ENCODE measurements at regions of chr17 and their contacts with region 1.

Region 1: DNA sequence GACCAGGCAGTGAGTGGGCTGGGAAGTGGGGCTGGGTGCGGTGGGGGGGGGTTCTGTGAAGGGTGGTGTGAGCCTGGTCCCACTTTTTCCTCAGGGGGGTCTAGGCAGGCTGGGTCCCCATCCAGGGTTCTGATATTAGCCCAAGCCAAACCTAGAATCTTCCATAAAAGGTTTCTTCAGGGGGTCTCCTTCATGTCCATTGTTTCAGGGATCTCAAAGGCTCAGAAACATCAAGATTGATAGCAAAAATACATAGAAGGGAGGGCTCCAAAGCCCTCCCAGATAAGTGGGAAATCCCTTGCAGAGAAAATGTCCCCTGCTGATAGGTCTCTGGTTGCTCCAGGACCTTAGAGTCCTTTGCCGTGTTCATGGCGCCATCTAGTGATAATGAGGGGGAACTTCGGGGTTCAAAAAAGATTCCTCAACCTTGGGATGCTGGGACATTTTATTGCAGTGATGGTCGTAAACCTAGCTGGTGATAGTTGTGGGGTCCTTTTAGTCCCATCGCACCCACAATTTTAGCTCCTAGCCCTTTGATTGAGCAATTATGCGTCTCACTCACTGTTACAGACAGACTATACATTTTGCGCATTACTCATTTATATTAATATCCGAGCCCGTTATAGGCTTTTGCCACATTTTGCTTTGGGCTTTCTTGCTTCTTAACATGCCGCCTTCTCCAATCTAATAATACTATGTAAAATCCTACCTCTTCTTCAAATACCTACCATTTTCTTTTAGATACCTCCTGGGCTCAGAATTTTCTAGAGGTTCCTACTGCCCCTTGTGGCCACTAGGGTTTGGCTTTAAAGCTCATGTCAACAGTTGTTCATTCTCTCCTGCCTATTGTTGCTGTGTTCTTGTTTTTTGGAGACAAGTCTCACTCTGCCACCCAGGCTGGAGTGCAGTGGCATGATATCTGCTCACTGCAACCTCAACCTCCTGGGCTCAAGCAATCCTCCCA is 35.1 kb downstream of the IGF2BP1 start:
- DNase-seq: peak; percentile 60
- H3K4me3 ChIP-seq: no peak overlapping the region
- H3K27ac ChIP-seq: no peak overlapping the region
- H3K27me3 ChIP-seq: no peaks in the 10 kb centered on the region
- CTCF ChIP-seq: peak; percentile 93

Region 2: GRCh38 chr17:48892940-48893645 is 139.2 kb before region 1 on chr17:
- CTCF ChIA-PET with region 1: interaction called, 12 read pairs
- POLR2A ChIA-PET with region 1: interaction called, 3 read pairs
- DNase-seq: no peak
- H3K4me3 ChIP-seq: peak overlapping the region; percentile 99
- H3K27ac ChIP-seq: peak overlapping the region; percentile 57
- H3K27me3 ChIP-seq: no peaks in the 10 kb centered on the region
- CTCF ChIP-seq: no peak

Region 3: GRCh38 chr17:48915459-48916282 is 116.6 kb before region 1 on chr17:
- CTCF ChIA-PET with region 1: interaction called, 15 read pairs
- POLR2A ChIA-PET with region 1: interaction called, 4 read pairs
- DNase-seq: peak; percentile 55
- H3K4me3 ChIP-seq: peak overlapping the region; percentile 29; the same call in 1 of the 2 replicates
- H3K27ac ChIP-seq: peak overlapping the region; percentile 96
- H3K27me3 ChIP-seq: no peaks in the 10 kb centered on the region
- CTCF ChIP-seq: no peak

Region 4: GRCh38 chr17:48944519-48945260 is 87.6 kb before region 1 on chr17 and contains the start of gene SNF8:
- CTCF ChIA-PET with region 1: interaction called, 14 read pairs
- POLR2A ChIA-PET with region 1: interaction called, 9 read pairs
- DNase-seq: peak; percentile 69
- H3K4me3 ChIP-seq: peak within 1 kb of the TSS; percentile 95
- H3K27ac ChIP-seq: peak within 1 kb of the TSS; percentile 91
- H3K27me3 ChIP-seq: no peaks in the 10 kb centered on the region
- CTCF ChIP-seq: no peak
- polyA plus RNA-seq, gene SNF8: 116 and 119 TPM in 2 replicates

Region 5: DNA sequence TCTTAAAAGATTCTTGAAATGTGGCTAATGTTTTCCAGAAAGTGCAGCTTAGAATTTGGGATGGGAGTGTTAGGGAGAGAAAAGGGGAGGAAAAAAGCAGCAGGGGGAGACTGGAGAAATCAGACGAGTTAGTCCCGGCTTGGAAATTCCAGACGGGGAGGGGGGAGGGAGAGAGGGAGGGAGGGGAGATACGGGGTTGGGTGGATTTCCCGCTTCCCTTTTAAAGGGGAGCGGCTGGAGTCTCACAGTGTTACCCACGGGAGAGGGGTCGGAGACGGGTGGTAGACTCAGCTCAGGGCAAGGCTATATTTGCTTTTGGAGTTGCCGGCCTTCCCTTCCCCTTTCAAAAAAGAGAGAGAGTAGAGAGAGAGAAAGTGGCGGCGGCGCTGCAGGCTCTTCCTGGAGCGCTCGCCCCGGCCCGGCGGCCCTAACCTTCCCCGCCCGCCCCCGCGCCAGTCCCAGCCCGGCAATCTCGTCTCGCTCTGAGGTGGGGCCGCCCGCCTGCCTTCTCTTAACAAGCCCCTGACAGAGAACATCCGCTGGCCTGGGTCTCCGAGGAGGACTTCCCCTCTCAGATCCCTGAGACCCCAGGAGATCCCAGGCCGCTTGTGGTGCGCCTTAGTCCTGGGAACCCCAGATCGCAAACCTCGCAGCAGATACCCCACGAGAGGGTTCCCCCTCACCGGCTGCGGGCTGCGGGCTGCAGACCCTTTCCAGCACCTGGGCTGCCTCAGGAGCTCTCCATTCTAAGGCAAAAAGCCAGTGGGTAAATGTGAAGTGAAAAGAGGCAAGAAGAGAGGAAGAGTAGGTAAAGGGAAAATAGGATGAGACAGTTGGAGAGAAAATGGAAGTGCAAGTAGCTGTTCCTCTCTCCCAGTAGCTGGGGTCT is 28.4 kb before region 1 on chr17:
- CTCF ChIA-PET with region 1: interaction called, 37 read pairs
- POLR2A ChIA-PET with region 1: no interaction called
- DNase-seq: no peak
- H3K4me3 ChIP-seq: peak overlapping the region; percentile 64
- H3K27ac ChIP-seq: peak overlapping the region; percentile 23
- H3K27me3 ChIP-seq: no peaks in the 10 kb centered on the region
- CTCF ChIP-seq: no peak

Region 6: DNA sequence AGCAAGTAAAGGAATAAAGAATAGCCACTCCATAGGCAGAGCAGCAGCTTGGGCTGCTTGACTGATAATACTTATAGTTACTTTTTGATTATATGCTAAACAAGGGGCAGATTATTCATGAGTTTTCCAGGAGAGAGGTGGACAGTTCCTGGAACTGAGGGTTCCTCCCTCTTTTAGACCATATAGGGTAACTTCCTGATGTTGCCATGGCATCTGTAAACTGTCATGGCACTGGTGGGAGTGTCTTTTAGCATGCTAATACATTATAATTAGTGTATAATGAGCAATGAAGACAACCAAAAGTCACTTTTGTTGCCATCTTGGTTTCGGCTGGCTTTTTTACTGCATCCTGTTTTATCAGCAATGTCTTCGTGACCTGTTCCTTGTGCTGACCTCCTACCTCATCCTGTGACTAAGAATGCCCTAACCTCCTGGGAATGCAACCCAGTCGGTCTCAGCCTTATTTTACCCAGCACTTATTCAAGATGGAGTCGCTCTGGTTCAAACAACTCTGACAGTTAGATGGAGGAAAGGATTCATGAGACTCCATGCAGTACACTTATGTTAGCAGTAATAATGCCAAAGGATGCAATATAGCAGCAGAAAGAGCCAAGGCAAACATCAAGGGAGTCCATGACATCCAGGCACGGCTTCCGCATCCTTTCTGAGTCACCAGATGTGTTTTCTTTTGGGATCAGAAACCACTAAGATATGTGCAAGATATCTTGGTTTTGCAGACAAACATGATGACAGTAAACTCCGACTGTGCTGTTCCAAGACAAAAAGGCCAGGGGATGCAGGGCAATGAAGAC is 44.5 kb after region 1 on chr17:
- CTCF ChIA-PET with region 1: no interaction called
- POLR2A ChIA-PET with region 1: no interaction called
- DNase-seq: peak; percentile 53
- H3K4me3 ChIP-seq: no peak overlapping the region
- H3K27ac ChIP-seq: peak overlapping the region; percentile 63
- H3K27me3 ChIP-seq: no peaks in the 10 kb centered on the region
- CTCF ChIP-seq: no peak

Region 7: DNA sequence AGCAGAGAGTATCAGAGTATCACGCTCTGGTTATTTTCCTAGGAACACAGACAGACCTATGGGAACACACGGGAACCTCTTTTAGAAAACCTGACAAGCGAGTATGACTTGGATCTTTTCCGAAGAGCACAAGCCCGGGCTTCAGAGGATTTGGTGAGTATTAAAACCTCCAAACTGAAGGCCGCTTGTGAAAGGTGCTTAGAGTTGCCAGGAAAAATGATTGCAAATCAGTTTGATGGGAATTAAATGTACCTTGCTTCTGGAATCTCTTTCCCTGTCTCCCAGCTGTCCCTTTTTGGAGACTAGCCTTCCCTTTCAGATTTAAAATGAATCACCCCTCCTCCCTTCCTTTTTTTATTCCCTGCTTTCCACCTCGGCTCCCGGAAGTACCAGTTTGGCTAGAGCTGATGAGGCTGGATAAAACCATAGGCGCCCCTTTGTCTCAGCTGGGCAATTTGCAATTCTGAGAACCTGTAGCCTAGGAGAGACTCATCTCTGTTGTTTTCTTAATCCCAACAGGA is 783.6 kb after region 1 on chr17:
- CTCF ChIA-PET with region 1: no interaction called
- POLR2A ChIA-PET with region 1: no interaction called
- DNase-seq: no peak
- H3K4me3 ChIP-seq: no peak overlapping the region
- H3K27ac ChIP-seq: no peak overlapping the region
- H3K27me3 ChIP-seq: no peaks in the 10 kb centered on the region
- CTCF ChIP-seq: no peak